K562 (cell line): ENCODE measurements at regions of chr3 and their contacts with region 1.

Region 1: DNA sequence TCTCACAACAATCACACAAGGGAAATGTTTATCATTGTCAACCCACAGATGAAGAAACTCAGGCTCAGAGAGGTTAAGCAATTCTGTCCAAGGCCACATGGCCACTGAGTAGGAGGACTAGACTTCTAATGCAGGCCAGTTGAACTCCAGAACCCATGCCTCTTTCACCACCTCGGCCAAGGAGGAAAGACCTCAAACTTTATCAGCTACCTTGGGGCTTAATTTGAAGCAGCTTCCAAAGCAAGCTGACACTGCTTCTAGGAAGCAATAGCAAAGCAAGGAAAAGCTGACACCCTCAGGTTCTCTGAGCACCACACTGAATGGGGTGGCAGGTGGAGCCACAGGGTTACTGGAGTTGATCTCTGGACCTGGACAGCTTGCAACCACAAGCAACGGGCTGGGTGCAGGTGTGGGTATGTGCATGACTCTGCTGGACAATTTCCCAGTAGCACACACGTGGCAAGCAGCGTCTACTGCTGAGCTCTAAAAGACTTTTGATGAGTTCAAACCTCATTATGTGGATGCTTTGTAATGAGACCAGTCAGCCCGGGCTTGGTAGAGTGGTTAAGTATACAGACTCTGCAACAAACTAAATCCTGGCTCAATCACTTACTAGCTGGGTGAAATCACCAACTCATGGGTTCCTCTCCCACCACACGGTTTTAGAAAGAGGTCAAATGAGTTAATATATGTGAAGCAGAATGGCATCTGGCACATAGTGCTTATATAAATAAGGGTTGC is 23.1 kb downstream of the CCNL1 start:
- DNase-seq: no peak
- ATAC-seq: peak; percentile 30; the same call in 2 of the 3 replicates
- H3K4me3 ChIP-seq: no peak overlapping the region
- H3K27ac ChIP-seq: no peak overlapping the region
- H3K4me1 ChIP-seq: peaks cover 8 to 16% of the 10 kb centered on the region in 2 experiments; a peak in 4 of 5 replicates
- H3K27me3 ChIP-seq: no peaks in the 10 kb centered on the region
- CTCF ChIP-seq: no peak
- EP300 ChIP-seq: no peak
- POLR2A ChIP-seq: no peak
- RAD21 ChIP-seq: peak in 1 of 2 experiments; percentile 5; a peak in 1 of 4 replicates

Region 2: DNA sequence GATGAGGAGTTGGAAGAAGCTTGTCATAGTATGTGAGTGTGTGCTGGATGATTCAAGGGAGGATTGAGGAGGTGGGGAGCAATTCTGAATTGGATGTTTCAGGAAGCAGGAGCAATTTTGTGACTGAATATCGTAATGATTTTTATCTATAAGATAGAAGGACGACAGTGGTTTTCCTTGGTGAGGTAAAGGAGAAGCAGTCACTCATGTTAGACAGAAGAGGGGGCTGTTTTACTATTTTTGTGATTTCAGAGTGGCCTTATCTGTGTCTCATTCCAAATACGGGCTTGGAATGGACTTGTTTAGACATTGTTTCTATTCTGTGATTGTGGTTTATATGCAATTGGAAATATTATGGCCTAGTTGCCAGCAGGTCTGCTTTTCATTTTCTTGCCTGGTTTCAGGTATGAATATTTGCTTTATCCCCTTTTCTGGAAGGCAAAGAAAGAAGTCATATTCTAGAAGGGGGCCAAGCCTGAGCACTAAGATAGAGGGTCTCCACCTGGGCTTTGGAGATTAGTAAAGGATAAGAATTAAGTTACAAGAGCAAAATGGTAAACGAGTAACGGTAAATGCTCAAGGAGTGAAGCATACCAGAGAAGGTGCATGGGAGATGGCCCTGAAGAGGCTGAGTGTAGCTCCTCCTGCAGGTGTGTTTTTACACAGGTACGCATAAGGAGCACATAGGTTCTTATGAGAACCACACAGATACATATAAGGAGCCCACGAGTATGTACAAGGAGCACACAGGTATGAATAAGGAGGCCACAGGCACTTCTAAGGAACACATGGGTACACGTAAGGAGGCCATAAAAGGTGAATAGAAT is 1141.1 kb before region 1 on chr3:
- CTCF ChIA-PET with region 1: interaction called, 3 read pairs
- POLR2A ChIA-PET with region 1: no interaction called
- in situ Hi-C with region 1: no loop called
- intact Hi-C with region 1: loop called (anchors 5 kb)
- DNase-seq: peak; percentile 22 to 61 (median 42)
- ATAC-seq: peak; percentile 95
- H3K4me3 ChIP-seq: no peak overlapping the region
- H3K27ac ChIP-seq: no peak overlapping the region
- H3K4me1 ChIP-seq: no peaks in the 10 kb centered on the region
- H3K27me3 ChIP-seq: peaks cover 7 to 13% of the 10 kb centered on the region in 2 experiments; a peak in 3 of 5 replicates
- CTCF ChIP-seq: peak; percentile 44 to 82 (median 69); a peak in 5 of 6 replicates
- EP300 ChIP-seq: no peak
- POLR2A ChIP-seq: no peak
- RAD21 ChIP-seq: peak; percentile 71 to 83

Region 3: DNA sequence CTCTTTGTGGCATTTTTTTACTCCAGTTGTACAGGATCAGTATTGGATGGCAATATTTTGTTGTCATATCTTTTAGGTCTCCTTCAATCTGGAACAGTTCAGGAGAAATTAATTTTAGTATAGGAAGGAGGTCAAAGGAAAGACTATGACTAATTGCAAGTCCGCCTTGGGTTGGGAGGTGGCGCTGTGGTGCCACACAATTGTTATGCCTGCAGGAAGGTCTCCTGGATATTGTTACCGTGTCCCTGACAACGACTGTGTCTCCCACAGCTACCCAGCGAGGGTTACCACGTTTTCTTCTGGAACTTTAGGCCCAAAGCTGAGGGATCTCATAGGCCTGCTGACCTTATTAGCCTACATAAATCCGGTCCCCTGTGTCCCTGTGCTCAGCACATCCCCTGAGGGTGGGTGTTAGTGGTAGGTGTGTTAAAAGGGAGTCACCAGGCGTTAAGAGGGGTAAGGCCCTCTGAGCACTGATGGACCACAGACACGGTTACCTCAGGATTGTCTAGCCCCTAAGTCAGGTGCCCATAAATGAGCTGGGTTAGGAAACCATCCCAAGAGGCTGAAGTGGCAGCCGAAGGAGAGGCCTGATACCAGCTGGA is 984.9 kb before region 1 on chr3:
- CTCF ChIA-PET with region 1: interaction called, 17 read pairs
- POLR2A ChIA-PET with region 1: no interaction called
- in situ Hi-C with region 1: loop called (anchors 5 kb)
- intact Hi-C with region 1: loop called (anchors 1 kb)
- DNase-seq: peak; percentile 35 to 69 (median 49)
- ATAC-seq: peak; percentile 91
- H3K4me3 ChIP-seq: no peak overlapping the region
- H3K27ac ChIP-seq: no peak overlapping the region
- H3K4me1 ChIP-seq: peaks cover 0 to 7% of the 10 kb centered on the region in 2 experiments; a peak in 2 of 5 replicates
- H3K27me3 ChIP-seq: peaks cover 2 to 4% of the 10 kb centered on the region in 2 experiments; a peak in 2 of 5 replicates
- CTCF ChIP-seq: peak; percentile 79 to 92 (median 91)
- EP300 ChIP-seq: no peak
- POLR2A ChIP-seq: no peak
- RAD21 ChIP-seq: peak; percentile 67 to 85

Region 4: GRCh38 chr3:156535162-156535627 is 601.6 kb before region 1 on chr3:
- CTCF ChIA-PET with region 1: no interaction called
- POLR2A ChIA-PET with region 1: no interaction called
- in situ Hi-C with region 1: loop called (anchors 25 kb)
- intact Hi-C with region 1: loop called (anchors 5 kb)
- DNase-seq: peak in 2 of 4 experiments; percentile 44 to 65
- ATAC-seq: peak; percentile 87
- H3K4me3 ChIP-seq: no peak overlapping the region
- H3K27ac ChIP-seq: no peak overlapping the region
- H3K4me1 ChIP-seq: no peaks in the 10 kb centered on the region; a peak in 1 of 5 replicates
- H3K27me3 ChIP-seq: no peaks in the 10 kb centered on the region
- CTCF ChIP-seq: peak; percentile 22 to 48 (median 42); a peak in 4 of 6 replicates
- EP300 ChIP-seq: no peak
- POLR2A ChIP-seq: no peak
- RAD21 ChIP-seq: peak; percentile 13 to 74; a peak in 2 of 4 replicates

Region 5: DNA sequence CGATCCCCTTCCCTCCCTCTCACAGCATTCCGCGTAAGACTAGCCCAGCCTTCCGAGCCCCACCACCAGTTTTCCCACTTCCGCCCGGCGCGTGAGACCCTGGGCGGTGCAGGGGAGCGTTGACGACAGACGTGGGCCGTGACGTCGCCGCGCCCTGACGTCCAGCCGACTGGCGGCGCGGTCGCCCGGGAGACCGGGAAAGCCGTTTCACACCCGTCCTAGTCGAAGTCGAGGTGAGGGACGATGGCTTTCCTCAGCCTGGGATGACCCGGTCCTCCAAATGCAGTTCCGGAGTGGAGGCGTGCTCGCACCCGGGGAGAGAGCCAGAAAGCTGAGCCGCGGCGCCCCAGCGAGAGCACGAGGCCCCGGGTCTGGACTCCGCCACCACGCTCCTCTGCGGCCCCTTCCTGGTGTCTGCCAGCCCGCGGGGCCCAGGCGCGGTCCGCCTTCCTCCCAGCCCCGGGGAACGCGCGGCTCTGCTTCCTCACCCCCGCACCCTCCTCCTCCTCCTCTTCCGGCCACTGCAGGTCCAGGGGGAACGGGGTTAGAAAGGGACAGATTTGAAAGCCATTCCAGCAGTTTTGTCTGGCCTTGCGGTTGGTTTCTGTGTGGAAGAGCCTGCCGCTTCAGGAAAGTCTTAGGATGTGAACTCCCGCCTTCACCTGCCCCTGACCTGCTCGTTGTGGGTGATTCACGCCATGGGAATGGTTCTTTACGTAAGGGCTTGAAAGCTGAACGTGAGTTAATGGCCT is 310.5 kb before region 1 on chr3 and contains the start of gene LEKR1:
- CTCF ChIA-PET with region 1: no interaction called
- POLR2A ChIA-PET with region 1: no interaction called
- in situ Hi-C with region 1: loop called (anchors 5 kb)
- intact Hi-C with region 1: loop called (anchors 2 kb)
- DNase-seq: peak; percentile 84 to 91 (median 86)
- ATAC-seq: peak; percentile 90
- H3K4me3 ChIP-seq: peak within 1 kb of the TSS; percentile 52
- H3K27ac ChIP-seq: peak within 1 kb of the TSS; percentile 97
- H3K4me1 ChIP-seq: peaks cover 13 to 18% of the 10 kb centered on the region in 2 experiments; a peak in 4 of 5 replicates
- H3K27me3 ChIP-seq: no peaks in the 10 kb centered on the region
- CTCF ChIP-seq: no peak
- EP300 ChIP-seq: peak; percentile 9; the same call in 1 of the 2 replicates
- POLR2A ChIP-seq: peak; percentile 96
- RAD21 ChIP-seq: no peak
- polyA plus RNA-seq, gene LEKR1: 1.3 to 1.8 TPM

Region 6: GRCh38 chr3:157239082-157239704 is 102.4 kb after region 1 on chr3:
- CTCF ChIA-PET with region 1: no interaction called
- POLR2A ChIA-PET with region 1: no interaction called
- in situ Hi-C with region 1: no loop called
- intact Hi-C with region 1: loop called (anchors 5 kb)
- DNase-seq: peak; percentile 48 to 79 (median 60)
- ATAC-seq: peak; percentile 99
- H3K4me3 ChIP-seq: no peak overlapping the region
- H3K27ac ChIP-seq: no peak overlapping the region
- H3K4me1 ChIP-seq: peaks cover 0 to 6% of the 10 kb centered on the region in 2 experiments; a peak in 1 of 5 replicates
- H3K27me3 ChIP-seq: no peaks in the 10 kb centered on the region
- CTCF ChIP-seq: peak; percentile 88 to 92 (median 91)
- EP300 ChIP-seq: no peak
- POLR2A ChIP-seq: no peak
- RAD21 ChIP-seq: peak; percentile 91 to 94

Region 7: GRCh38 chr3:157631478-157631877 is 494.7 kb after region 1 on chr3:
- CTCF ChIA-PET with region 1: no interaction called
- POLR2A ChIA-PET with region 1: no interaction called
- in situ Hi-C with region 1: no loop called
- intact Hi-C with region 1: no loop called
- DNase-seq: no peak
- ATAC-seq: no peak
- H3K4me3 ChIP-seq: no peak overlapping the region
- H3K27ac ChIP-seq: no peak overlapping the region
- H3K4me1 ChIP-seq: peaks cover 0 to 2% of the 10 kb centered on the region in 2 experiments; a peak in 1 of 5 replicates
- H3K27me3 ChIP-seq: 0 out of 5 replicates have a peak, but pooled peaks cover 0 to 4% of the 10 kb centered on the region in 2 experiments
- CTCF ChIP-seq: no peak
- EP300 ChIP-seq: no peak
- POLR2A ChIP-seq: no peak
- RAD21 ChIP-seq: no peak